ENCODE measurements at regions of chr16 and their contacts with region 1.

Region 1: DNA sequence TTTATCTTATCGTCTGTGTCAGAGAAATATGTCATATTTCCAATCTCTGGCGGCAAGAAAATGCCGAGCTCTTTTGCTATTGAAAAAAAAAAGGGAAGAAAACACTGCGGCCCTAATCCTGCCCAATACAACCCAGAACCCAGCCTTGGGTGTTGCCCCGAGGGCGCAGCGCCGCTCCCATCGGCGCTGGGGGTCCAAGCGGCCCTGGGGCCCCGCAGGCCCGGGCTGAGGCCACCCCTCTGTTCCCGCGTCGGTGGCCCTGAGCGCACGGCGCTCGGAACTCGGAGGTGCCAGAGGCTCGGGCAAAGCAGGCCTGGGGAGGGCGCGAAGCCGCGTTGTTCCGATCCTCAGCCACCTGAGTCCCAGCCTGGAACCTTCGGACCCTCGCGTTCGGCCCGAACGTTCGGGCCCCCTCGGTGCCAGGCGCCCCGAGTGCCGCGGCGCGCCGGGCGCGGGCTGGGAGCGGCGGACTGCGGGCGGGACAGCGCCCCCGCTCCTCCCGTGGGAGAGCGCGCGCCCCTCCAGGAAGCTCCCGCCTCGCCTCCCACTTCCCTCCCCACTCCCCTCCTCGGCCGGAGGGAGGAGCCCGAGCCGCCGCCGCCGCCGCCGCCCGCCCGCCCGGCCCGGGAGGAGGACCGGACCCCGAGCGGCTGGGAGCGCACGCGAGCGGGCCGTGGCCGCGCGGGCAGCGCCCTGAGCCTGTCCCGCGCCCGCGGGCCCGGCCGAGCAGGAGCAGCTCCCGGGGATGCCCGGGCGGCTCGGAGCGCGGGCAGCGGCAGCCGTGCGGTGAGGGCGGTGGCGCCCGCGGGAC is at the start of gene CPNE2:
- DNase-seq: no peak
- H3K4me3 ChIP-seq: peak within 1 kb of the TSS; percentile 74
- H3K27me3 ChIP-seq: no peaks in the 10 kb centered on the region
- CTCF ChIP-seq: no peak
- polyA plus RNA-seq, gene CPNE2: 51.0 and 80.6 TPM in 2 replicates

Region 2: DNA sequence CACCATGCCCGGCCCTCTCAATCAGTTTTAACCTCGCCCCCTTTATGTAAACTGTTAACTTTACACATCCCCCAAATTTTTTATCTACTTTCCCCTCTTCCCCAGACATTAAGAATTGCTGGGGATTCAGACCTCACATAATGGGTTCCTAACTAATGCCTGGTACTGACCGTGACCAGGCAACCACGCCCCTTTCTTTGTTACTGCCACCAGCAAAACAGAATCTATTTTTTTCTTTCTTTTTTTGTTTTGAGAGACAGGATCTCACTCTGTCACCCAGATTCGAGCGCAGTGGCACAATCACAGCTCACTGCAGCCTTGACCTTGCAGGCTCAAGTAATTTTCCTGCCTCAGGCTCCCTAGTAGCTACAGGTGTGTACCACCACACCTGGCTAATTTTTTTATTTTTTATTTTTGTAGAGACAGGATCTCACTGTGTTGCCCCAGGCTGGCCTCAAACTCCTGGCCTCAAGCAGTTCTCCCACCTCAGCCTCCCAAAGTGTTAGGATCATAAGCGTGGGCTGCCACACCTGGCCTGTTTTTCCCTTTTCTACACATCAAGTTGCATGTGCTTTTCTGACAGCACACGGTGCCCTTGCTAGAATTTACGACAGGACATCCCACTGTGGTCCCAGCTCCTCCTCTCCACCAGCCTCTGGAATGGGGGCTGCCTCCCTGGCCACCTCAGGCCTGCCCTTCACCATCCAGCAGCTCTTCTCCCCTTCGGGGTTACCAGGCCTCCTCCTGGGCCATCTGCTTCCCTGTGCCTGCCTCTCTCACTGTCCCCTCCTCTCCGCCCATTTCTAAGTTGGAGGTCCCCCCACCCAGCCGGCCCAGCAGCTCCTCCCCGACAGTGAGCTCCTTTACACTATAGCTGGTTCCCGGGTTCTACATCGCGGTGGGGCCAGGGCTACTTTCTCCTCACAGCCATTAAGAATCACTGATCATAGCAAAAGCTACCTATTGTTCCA is 11.0 kb after region 1 on chr16:
- CTCF ChIA-PET with region 1: interaction called, 15 read pairs
- POLR2A ChIA-PET with region 1: interaction called, 19 read pairs
- DNase-seq: no peak
- H3K4me3 ChIP-seq: no peak overlapping the region
- H3K27me3 ChIP-seq: no peaks in the 10 kb centered on the region
- CTCF ChIP-seq: no peak

Region 3: DNA sequence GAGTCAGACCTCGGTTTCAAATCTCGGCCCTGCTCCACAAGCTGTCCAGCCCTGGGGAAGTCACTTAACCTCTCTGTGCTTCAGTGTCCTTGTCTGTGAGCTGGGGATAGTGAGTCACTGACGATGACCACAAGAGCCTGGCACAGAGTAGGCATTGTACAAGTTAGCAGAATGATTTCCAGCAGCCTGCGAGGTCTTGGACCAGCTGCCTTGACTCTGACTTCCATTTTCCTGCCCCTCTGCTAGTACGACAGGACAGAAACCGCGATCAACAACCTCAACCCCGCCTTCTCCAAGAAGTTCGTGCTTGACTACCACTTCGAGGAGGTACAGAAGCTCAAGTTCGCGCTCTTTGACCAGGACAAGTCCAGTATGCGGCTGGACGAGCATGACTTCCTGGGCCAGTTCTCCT is 20.9 kb after region 1 on chr16:
- CTCF ChIA-PET with region 1: interaction called, 16 read pairs
- POLR2A ChIA-PET with region 1: no interaction called
- DNase-seq: no peak
- H3K4me3 ChIP-seq: no peak overlapping the region
- H3K27me3 ChIP-seq: no peaks in the 10 kb centered on the region
- CTCF ChIP-seq: no peak

Region 4: DNA sequence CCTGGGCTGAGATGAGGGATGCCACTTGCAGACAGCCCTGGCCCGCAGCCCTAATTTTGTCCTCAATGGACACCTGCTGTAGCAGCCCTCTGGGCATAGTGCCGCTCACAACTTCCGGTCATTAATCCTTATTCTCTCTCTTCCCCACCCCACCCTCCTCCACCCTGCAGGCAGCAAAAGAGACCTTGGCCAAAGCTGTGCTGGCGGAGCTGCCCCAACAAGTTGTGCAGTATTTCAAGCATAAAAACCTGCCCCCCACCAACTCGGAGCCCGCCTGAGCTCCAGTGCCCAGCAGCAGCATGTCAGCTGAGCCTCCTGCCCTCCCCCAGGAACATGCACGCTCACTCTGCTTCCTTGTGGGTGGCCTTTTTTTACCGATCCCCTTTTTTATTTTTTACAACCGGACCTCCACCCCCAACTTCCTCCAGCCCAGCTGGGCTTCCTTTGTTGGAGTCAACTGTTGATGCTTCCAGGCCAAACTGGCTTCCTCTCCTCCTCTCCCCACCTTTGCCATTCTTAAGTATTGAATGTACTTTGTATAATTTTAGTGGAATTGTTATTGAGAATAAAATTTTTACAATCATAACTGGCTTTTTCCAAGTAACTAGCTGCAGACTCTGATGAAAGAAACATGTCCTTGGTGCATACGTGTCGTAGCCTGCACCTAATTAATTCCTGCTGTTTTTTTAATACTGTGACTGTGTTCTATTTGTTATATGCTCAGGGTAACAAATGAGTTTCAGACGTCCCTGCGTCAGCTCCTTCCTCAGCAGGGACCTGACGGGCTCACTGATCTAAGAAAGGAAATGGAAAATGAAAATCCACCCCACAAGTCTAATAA is 55.4 kb after region 1 on chr16:
- CTCF ChIA-PET with region 1: interaction called, 19 read pairs
- POLR2A ChIA-PET with region 1: no interaction called
- DNase-seq: peak; percentile 67
- H3K4me3 ChIP-seq: no peak overlapping the region
- H3K27me3 ChIP-seq: no peaks in the 10 kb centered on the region
- CTCF ChIP-seq: no peak

Region 5: DNA sequence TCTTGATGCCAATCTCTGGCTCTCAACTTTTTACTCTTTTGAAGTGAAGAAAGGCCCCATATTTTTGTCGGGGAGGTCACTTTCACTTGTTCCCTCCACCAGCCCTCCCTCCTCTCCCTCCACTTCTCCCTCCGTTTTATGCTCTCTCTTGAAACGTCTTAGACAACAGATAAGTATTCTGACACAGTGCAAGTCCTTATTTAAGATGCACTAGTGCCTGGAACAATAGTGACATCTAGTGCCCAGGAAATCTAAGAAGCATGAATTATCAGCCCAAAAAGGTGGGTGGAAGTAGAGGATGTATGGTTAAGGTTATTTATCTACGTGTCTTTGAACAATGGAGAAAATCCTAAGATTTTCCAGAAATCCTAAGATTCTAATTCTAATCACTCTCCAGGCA is 75.8 kb after region 1 on chr16:
- CTCF ChIA-PET with region 1: interaction called, 14 read pairs
- POLR2A ChIA-PET with region 1: interaction called, 4 read pairs
- DNase-seq: no peak
- H3K4me3 ChIP-seq: no peak overlapping the region
- H3K27me3 ChIP-seq: no peaks in the 10 kb centered on the region
- CTCF ChIP-seq: peak; percentile 77